Psoas muscle (tissue), 8 donors: ENCODE measurements at regions of chr17 and their contacts with region 1.

Region 1: GRCh38 chr17:47077576-47077975 is 98.5 kb upstream of the RPRML start:
- DNase-seq: no peak
- ATAC-seq: no peak
- H3K4me3 ChIP-seq: no peak overlapping the region
- H3K27ac ChIP-seq: no peak overlapping the region
- H3K4me1 ChIP-seq: peaks cover 10% of the 10 kb centered on the region
- H3K27me3 ChIP-seq: no peaks in the 10 kb centered on the region
- CTCF ChIP-seq: no peak

Region 2: GRCh38 chr17:47305302-47305923 is 227.8 kb after region 1 on chr17:
- intact Hi-C with region 1: no loop called
- DNase-seq: no peak
- ATAC-seq: peak in 3 of 4 donors; percentile 17 to 30 (median 27)
- H3K4me3 ChIP-seq: no peak overlapping the region
- H3K27ac ChIP-seq: peak overlapping the region; percentile 23
- H3K4me1 ChIP-seq: peaks cover 4% of the 10 kb centered on the region
- H3K27me3 ChIP-seq: no peaks in the 10 kb centered on the region
- CTCF ChIP-seq: no peak

Region 3: GRCh38 chr17:47604598-47604927 is 527.0 kb after region 1 on chr17:
- intact Hi-C with region 1: no loop called
- DNase-seq: no peak
- ATAC-seq: peak in 1 of 4 donors; percentile 56
- H3K4me3 ChIP-seq: no peak overlapping the region
- H3K27ac ChIP-seq: no peak overlapping the region
- H3K4me1 ChIP-seq: no peaks in the 10 kb centered on the region
- H3K27me3 ChIP-seq: no peaks in the 10 kb centered on the region
- CTCF ChIP-seq: no peak

Region 4: GRCh38 chr17:48816774-48817590 is 1739.4 kb after region 1 on chr17 and contains the start of gene TTLL6:
- intact Hi-C with region 1: loop called in 1 of 2 experiments (anchors 5 kb)
- DNase-seq: peak; percentile 74 to 82
- ATAC-seq: peak; percentile 71 to 93 (median 88)
- H3K4me3 ChIP-seq: peak within 1 kb of the TSS; percentile 59
- H3K27ac ChIP-seq: no peak within 1 kb of the TSS
- H3K4me1 ChIP-seq: no peaks in the 10 kb centered on the region
- H3K27me3 ChIP-seq: peaks cover 0 to 71% (median 6%) of the 10 kb centered on the region in 3 donors
- CTCF ChIP-seq: no peak
- total RNA-seq, gene TTLL6: not detected